Activated naive CD4-positive, alpha-beta T cell treated with anti-CD3 and anti-CD28 coated beads for 36 hours (primary cell): ENCODE measurements at regions of chr1 and their contacts with region 1.

Region 1: DNA sequence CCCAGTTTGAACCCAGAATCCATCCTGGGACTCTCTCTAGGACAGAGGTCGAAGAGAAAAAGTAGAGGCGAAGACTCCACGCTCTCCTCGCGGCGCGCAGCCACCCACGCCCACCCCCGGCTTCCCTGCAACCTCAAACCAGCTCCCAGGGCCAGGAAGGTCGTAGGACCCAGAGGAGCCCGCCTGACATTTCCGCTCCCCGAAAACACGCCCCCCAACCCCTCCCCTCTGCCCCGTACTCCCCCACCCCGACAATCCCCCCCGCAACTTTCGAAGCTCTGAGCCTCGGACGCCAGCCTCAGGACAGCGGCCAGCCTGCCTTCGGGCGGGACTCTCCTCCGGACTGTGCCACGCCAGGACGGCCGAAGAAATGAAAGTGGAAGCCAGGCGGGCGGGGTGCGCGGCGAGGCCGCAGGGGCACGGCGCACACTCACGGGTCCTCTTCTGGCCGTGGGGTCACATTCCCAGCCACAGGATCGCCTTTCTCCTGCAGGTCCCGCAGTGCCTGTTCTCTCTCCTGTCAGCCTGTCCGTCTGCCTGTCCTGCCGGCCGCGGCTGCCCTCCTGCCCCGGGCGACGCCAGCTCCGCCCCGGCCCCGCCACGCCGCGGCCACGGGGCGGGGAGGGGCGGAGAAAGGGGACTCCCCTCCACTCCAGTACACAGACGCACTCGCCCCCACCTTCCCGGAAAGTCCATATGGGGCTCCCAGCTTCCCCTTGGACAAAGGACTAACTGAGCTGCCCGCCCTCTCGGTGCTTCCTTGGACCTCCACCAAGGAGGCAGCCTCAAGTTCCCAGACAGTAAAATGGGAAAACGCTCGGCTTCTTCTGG is at the start of gene MOB3C:
- DNase-seq: peak; percentile 69
- H3K4me3 Mint-ChIP-seq: peak within 1 kb of the TSS; percentile 86
- H3K27ac Mint-ChIP-seq: peak within 1 kb of the TSS; percentile 68
- H3K4me1 Mint-ChIP-seq: peaks cover 43% of the 10 kb centered on the region
- H3K27me3 Mint-ChIP-seq: no peaks in the 10 kb centered on the region
- total RNA-seq, gene MOB3C: 4.8 to 5.0 TPM

Region 2: DNA sequence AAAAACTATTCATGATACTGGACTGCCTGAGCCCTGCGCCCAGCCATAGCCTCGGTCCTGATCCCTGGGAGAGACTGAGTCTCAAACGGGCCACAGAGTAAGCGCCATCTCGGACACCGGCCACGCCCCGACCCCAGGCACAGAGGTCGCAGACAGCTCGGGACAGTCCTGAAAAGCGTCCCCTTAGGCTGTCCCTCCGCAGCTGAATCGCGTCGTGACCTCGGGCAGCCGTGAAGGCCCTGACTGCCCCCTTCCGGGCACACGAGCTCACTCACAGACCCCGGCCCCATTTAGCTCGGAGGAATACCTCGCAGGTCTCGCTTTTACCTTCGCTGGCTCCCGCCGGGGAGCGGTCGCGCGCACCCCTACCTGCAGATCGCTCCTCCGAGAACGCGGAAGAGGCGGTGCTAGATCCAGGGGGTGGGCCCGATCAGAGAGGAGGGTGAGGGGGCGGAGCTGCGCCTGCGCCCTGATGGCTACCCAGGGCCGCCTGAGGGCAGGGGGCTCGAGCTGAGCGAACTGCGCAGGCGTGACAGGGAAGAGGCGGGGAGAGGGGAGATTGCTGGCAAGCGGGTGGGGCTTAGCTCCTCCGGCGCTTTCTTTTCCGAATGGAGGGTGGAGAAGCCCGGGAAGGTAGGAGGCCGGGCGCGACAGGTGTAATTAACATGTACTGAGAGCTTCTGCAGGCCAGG is 12.5 kb before region 1 on chr1 and contains the start of gene MKNK1:
- CTCF ChIA-PET with region 1: interaction called, 8 read pairs
- intact Hi-C with region 1: loop called (anchors 1 kb)
- DNase-seq: peak; percentile 98
- H3K4me3 Mint-ChIP-seq: peak within 1 kb of the TSS; percentile 92
- H3K27ac Mint-ChIP-seq: peak within 1 kb of the TSS; percentile 87
- H3K4me1 Mint-ChIP-seq: peaks cover 49% of the 10 kb centered on the region
- H3K27me3 Mint-ChIP-seq: no peaks in the 10 kb centered on the region
- total RNA-seq, gene MKNK1: 18.5 to 21.2 TPM

Region 3: GRCh38 chr1:46667782-46668760 is 51.6 kb after region 1 on chr1 and contains the start of gene ATPAF1:
- CTCF ChIA-PET with region 1: no interaction called
- intact Hi-C with region 1: loop called (anchors 1 kb)
- DNase-seq: peak; percentile 83
- H3K4me3 Mint-ChIP-seq: no peak within 1 kb of the TSS
- H3K27ac Mint-ChIP-seq: peak within 1 kb of the TSS; percentile 9
- H3K4me1 Mint-ChIP-seq: peaks cover 15% of the 10 kb centered on the region
- H3K27me3 Mint-ChIP-seq: no peaks in the 10 kb centered on the region
- total RNA-seq, gene ATPAF1: 44.5 to 49.2 TPM

Region 4: GRCh38 chr1:46718727-46719622 is 102.5 kb after region 1 on chr1 and contains the start of gene EFCAB14:
- CTCF ChIA-PET with region 1: interaction called, 13 read pairs
- intact Hi-C with region 1: loop called (anchors 1 kb)
- DNase-seq: peak; percentile 99
- H3K4me3 Mint-ChIP-seq: peak within 1 kb of the TSS; percentile 92
- H3K27ac Mint-ChIP-seq: peak within 1 kb of the TSS; percentile 84
- H3K4me1 Mint-ChIP-seq: peaks cover 37% of the 10 kb centered on the region
- H3K27me3 Mint-ChIP-seq: no peaks in the 10 kb centered on the region
- total RNA-seq, gene EFCAB14: 35.8 to 38.3 TPM

Region 5: GRCh38 chr1:46724991-46725735 is 108.7 kb after region 1 on chr1:
- CTCF ChIA-PET with region 1: interaction called, 13 read pairs
- intact Hi-C with region 1: no loop called
- DNase-seq: peak; percentile 83
- H3K4me3 Mint-ChIP-seq: no peak overlapping the region
- H3K27ac Mint-ChIP-seq: no peak overlapping the region
- H3K4me1 Mint-ChIP-seq: no peaks in the 10 kb centered on the region
- H3K27me3 Mint-ChIP-seq: peaks cover 23% of the 10 kb centered on the region